OCI-LY7 (cell line): ENCODE measurements at regions of chr7 and their contacts with region 1.

Region 1: DNA sequence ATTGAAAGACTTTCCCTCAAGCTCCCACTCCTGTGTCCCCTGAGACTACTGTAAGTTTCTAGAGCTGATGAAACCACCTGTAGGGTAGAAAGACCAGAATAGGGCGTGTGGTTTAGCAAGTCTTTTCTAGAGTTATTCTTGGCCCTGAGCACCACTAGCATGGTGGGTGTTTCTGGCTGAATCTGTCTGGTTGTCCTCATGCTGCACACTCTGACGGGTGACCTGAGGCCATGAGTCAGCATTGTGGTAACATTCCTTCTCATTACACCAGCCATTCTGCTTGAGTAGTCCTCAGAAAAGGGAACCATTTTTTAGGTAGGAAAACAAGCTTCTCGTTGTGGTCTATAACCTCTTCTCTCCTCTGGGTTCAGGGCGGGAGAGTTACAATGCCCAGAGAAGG is 250.3 kb downstream of the SNX13 start:
- DNase-seq: no peak
- H3K4me3 ChIP-seq: no peak overlapping the region
- H3K27ac ChIP-seq: no peak overlapping the region
- H3K4me1 ChIP-seq: no peaks in the 10 kb centered on the region
- CTCF ChIP-seq: no peak

Region 2: GRCh38 chr7:17593819-17594419 is 96.1 kb before region 1 on chr7:
- CTCF ChIA-PET with region 1: no interaction called
- POLR2A ChIA-PET with region 1: no interaction called
- intact Hi-C with region 1: no loop called
- DNase-seq: no peak
- H3K4me3 ChIP-seq: no peak overlapping the region
- H3K27ac ChIP-seq: no peak overlapping the region
- H3K4me1 ChIP-seq: no peaks in the 10 kb centered on the region
- CTCF ChIP-seq: no peak

Region 3: DNA sequence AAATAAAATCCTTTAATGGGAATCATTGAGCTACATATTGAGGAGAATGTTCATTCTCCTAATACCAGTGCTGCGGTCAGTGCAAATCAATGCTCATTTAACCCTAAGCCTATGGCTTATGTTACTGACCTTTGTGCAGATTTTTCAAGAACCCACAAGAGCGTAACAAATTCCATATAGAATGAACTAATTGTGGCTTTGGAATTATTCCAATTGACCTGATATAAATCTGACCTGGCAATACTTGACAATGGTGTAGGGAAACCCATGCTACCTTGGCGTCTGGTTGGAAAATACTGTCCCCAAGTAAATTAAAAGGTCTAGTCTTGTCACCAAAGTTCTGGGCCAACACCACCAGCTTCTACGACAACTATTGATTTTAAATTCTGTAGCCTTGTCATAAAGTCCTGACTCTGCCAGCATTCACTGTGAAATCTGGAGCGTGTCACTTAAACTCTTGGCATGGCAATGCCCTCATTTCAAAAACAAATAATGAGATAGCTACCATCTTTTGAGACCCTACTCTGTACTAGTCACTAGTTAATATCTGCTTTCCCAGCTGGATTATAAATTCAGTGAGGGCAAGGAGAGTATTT is 70.7 kb before region 1 on chr7:
- CTCF ChIA-PET with region 1: no interaction called
- POLR2A ChIA-PET with region 1: interaction called, 12 read pairs
- intact Hi-C with region 1: no loop called
- DNase-seq: no peak
- H3K4me3 ChIP-seq: no peak overlapping the region
- H3K27ac ChIP-seq: no peak overlapping the region
- H3K4me1 ChIP-seq: no peaks in the 10 kb centered on the region
- CTCF ChIP-seq: no peak

Region 4: DNA sequence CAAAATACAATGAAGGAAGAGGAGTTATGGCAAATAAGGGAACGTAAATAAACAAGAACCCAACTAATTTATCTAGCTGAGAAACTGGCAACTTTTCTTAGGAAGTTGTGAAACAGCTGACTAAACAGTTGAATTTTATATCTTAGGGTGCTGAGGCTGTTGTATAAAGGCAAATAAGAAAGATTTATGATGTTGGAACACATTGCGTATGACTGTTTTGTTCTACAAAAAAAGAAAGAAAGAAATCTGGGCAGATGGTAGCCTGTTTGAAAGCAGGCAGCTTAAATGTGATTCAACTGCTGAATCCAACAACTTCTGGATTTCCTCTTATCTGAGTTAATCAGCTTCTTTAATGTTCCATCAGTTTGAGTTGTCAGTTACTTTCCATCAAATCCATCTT is 35.8 kb after region 1 on chr7:
- CTCF ChIA-PET with region 1: no interaction called
- POLR2A ChIA-PET with region 1: no interaction called
- intact Hi-C with region 1: no loop called
- DNase-seq: no peak
- H3K4me3 ChIP-seq: no peak overlapping the region
- H3K27ac ChIP-seq: no peak overlapping the region
- H3K4me1 ChIP-seq: no peaks in the 10 kb centered on the region
- CTCF ChIP-seq: no peak